Psoas muscle (tissue), 8 donors: ENCODE measurements at regions of chr10 and their contacts with region 1.

Region 1: GRCh38 chr10:86755740-86756510 is 494 bp upstream of the BMPR1A start:
- DNase-seq: peak; percentile 93
- ATAC-seq: peak; percentile 83 to 88 (median 86)
- H3K4me3 ChIP-seq: peak overlapping the region; percentile 92
- H3K27ac ChIP-seq: peak overlapping the region; percentile 100
- H3K4me1 ChIP-seq: peaks cover 44% of the 10 kb centered on the region
- H3K27me3 ChIP-seq: no peaks in the 10 kb centered on the region
- CTCF ChIP-seq: no peak

Region 2: GRCh38 chr10:85724215-85724614 is 1031.7 kb before region 1 on chr10:
- intact Hi-C with region 1: no loop called
- DNase-seq: no peak
- ATAC-seq: no peak
- H3K4me3 ChIP-seq: no peak overlapping the region
- H3K27ac ChIP-seq: no peak overlapping the region
- H3K4me1 ChIP-seq: no peaks in the 10 kb centered on the region
- H3K27me3 ChIP-seq: no peaks in the 10 kb centered on the region
- CTCF ChIP-seq: no peak

Region 3: DNA sequence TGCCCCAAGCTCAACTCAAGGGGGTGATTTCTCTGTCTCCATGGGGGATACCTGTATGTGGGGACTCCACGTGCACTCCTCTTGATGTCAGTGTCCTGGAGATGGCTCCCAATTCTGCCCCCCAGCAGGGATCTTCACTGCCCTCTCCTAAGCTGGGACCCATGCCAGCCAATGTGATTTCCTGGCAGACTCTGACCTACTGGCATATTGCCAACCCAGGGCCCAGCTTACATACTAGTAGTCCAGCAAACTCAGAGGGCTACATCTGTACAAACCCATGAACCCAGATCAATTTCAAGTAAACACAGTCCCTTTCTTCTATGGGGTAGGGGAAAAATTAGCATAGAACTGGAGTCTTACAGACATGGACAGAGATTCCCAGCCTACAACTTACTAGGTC is 25.7 kb before region 1 on chr10:
- intact Hi-C with region 1: loop called in 1 of 2 experiments (anchors 2 kb)
- DNase-seq: peak in 1 of 2 donors; percentile 67
- ATAC-seq: peak in 1 of 4 donors; percentile 21
- H3K4me3 ChIP-seq: no peak overlapping the region
- H3K27ac ChIP-seq: peak overlapping the region; percentile 86
- H3K4me1 ChIP-seq: peaks cover 67% of the 10 kb centered on the region
- H3K27me3 ChIP-seq: no peaks in the 10 kb centered on the region
- CTCF ChIP-seq: no peak